CD14-positive monocyte (primary cell): ENCODE measurements at regions of chr3 and their contacts with region 1.

Region 1: DNA sequence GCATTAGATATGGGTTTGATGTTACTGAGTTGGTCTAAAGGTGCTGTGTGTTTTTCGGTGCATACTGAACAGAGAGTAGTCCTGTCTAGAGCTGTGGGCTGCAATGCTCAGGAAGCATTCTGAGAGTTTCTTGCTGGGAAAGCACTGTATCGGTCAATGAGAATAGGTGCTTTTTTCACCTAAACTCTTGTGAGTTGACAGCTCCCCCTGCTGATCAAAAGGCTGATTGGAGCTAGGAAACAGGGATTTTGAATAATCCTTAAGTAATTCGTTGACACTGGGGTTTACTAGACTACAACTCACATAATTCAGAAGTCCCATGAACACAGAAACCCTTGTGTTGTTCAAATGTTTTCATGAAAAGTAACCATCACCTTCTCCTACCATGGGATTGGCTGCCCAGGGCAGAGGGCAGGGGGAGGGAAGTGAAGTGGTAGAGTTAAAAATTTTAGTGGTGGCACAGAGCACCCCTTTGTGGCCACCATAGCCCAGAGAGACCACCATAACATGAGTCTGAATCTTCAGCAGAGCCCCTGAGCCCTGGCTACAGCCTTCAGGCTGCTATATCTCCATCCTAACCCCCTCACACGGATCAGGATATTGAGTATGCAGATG is 13.0 kb upstream of the MANF start:
- DNase-seq: peak in 2 of 3 donors; percentile 35 to 41
- H3K4me3 ChIP-seq: no peak overlapping the region
- H3K4me3 Mint-ChIP-seq: no peak overlapping the region
- H3K27ac ChIP-seq: no peak overlapping the region
- H3K27ac Mint-ChIP-seq: no peak overlapping the region
- H3K4me1 ChIP-seq: no peaks in the 10 kb centered on the region
- H3K4me1 Mint-ChIP-seq: no peaks in the 10 kb centered on the region
- H3K27me3 ChIP-seq: no peaks in the 10 kb centered on the region
- H3K27me3 Mint-ChIP-seq: peaks cover 0 to 10% (median 1%) of the 10 kb centered on the region in 3 donors
- CTCF ChIP-seq: peak; percentile 71

Region 2: DNA sequence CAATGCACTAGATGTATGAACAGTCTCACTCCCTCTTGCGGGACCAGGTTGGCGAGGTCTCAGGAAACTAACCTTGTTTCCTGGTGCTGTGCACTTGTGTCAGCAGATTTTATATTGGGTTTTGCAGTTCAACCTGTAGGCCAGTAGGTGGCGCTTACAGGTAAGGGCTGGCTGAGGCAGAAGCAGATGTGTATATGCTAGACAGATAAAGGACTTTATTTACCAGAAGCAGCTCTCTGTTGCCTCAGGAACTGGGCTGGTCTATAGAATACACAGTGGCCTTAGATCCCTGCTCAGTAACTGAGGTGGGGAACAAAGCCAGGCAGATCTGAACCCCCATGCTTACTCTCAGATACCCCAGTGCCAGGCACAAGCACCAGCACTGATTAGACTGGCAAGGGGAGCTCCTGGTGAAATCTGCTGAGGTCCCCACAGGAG is 400.5 kb before region 1 on chr3:
- intact Hi-C with region 1: loop called in 1 of 2 experiments (anchors 10 kb)
- DNase-seq: peak; percentile 18 to 48 (median 48)
- H3K4me3 ChIP-seq: no peak overlapping the region
- H3K4me3 Mint-ChIP-seq: no peak overlapping the region
- H3K27ac ChIP-seq: no peak overlapping the region
- H3K27ac Mint-ChIP-seq: peak overlapping the region in 1 of 7 donors; percentile 57
- H3K4me1 ChIP-seq: no peaks in the 10 kb centered on the region
- H3K4me1 Mint-ChIP-seq: peaks cover 2% of the 10 kb centered on the region
- H3K27me3 ChIP-seq: no peaks in the 10 kb centered on the region
- H3K27me3 Mint-ChIP-seq: peaks cover 0 to 1% (median 0%) of the 10 kb centered on the region in 3 donors
- CTCF ChIP-seq: peak; percentile 93

Region 3: GRCh38 chr3:51099794-51100535 is 272.1 kb before region 1 on chr3:
- intact Hi-C with region 1: loop called in 1 of 2 experiments (anchors 5 kb)
- DNase-seq: peak; percentile 3 to 37 (median 31)
- H3K4me3 ChIP-seq: no peak overlapping the region
- H3K4me3 Mint-ChIP-seq: no peak overlapping the region
- H3K27ac ChIP-seq: no peak overlapping the region
- H3K27ac Mint-ChIP-seq: no peak overlapping the region
- H3K4me1 ChIP-seq: no peaks in the 10 kb centered on the region
- H3K4me1 Mint-ChIP-seq: no peaks in the 10 kb centered on the region
- H3K27me3 ChIP-seq: no peaks in the 10 kb centered on the region
- H3K27me3 Mint-ChIP-seq: peaks cover 0 to 4% (median 0%) of the 10 kb centered on the region in 3 donors
- CTCF ChIP-seq: peak; percentile 71

Region 4: DNA sequence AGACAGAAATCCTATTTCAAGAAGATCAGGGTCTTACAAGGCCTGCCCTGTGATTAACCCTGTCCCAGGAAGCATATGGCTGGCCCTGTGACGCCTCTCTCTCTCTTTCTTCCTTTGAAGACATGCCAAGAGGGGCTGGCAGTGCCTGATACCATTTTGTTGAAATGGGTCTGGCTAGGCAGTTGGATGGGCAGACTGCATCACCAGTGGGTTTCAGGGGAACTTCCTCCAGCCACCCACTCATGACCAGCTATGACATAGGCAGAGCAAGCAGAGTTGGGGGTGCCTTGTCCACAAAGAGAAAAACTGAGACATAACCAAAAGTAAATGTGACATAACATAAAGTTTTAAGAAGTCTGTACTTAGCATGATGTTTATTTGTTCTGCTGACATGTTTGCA is 18.4 kb before region 1 on chr3:
- intact Hi-C with region 1: no loop called
- DNase-seq: no peak
- H3K4me3 ChIP-seq: no peak overlapping the region
- H3K4me3 Mint-ChIP-seq: no peak overlapping the region
- H3K27ac ChIP-seq: no peak overlapping the region
- H3K27ac Mint-ChIP-seq: no peak overlapping the region
- H3K4me1 ChIP-seq: no peaks in the 10 kb centered on the region
- H3K4me1 Mint-ChIP-seq: no peaks in the 10 kb centered on the region
- H3K27me3 ChIP-seq: no peaks in the 10 kb centered on the region
- H3K27me3 Mint-ChIP-seq: peaks cover 0 to 2% (median 1%) of the 10 kb centered on the region in 3 donors
- CTCF ChIP-seq: no peak

Region 5: DNA sequence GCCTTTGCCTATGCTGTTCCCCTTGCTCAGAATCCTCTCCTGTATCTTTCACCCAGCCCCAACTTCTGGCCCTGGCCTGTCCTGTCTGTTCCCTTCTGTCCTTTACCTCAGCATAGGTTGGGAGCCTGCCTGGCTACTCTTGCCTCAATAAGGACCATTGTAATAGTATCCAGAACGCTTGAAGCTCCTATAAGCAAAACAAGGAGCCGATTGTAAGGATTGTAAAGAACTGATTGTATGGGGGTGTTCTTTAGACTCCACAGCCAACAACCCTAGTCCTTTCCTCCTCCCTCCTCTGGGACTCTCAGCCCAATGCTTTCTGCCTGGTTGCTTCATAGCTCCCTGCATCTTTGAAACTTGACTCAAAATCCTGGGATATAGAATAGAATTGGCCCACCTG is 147.8 kb after region 1 on chr3:
- intact Hi-C with region 1: no loop called
- DNase-seq: no peak
- H3K4me3 ChIP-seq: no peak overlapping the region
- H3K4me3 Mint-ChIP-seq: no peak overlapping the region
- H3K27ac ChIP-seq: no peak overlapping the region
- H3K27ac Mint-ChIP-seq: peak overlapping the region in 1 of 7 donors; percentile 52
- H3K4me1 ChIP-seq: no peaks in the 10 kb centered on the region
- H3K4me1 Mint-ChIP-seq: peaks cover 5% of the 10 kb centered on the region
- H3K27me3 ChIP-seq: no peaks in the 10 kb centered on the region
- H3K27me3 Mint-ChIP-seq: peaks cover 0 to 2% (median 0%) of the 10 kb centered on the region in 3 donors
- CTCF ChIP-seq: no peak